Naive thymus-derived CD4-positive, alpha-beta T cell (primary cell): ENCODE measurements at regions of chr2 and their contacts with region 1.

Region 1: DNA sequence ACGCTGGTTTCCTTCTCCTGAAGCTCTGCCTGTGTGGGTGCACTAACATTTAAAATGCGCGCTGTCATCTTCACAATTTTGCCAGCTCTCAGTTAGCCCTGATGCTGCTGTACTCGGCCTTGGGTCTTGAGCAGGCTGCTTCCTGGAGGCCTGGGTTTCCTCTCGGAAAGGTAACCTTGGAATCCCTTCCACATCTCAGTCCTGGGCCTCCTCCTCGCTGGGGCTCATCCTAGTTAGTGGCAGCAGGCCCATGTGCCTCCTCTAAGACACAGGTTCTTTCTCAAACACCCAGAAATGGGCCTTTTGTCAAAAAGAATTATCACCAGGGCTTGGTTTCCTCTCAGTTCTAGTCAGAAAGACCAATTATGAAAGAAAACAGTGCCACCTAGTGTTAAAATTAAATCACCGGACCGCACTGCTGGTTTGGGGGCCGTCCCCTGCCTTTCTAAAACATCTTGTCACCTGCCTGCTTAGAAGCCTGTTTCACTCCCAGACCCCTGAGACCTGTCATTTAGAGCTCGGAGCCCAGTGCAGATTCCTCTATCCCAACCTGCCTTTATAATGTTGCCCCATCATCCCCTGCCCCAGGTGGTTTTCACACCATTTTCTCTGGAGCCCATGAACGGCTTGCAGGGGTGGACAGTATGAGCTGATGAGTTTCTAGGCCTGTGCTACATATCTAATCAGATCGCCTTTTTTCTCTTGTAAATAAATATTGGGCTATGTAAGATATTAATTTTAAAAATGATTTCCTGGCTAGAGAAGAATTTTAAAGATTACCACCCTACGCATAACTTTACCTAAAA is 42.4 kb downstream of the HK2 start:
- DNase-seq: peak in 7 of 9 donors; percentile 36 to 80 (median 76)
- ATAC-seq: peak; percentile 74
- H3K4me3 ChIP-seq: no peak overlapping the region
- H3K4me3 Mint-ChIP-seq: no peak overlapping the region
- H3K27ac ChIP-seq: no peak overlapping the region
- H3K27ac Mint-ChIP-seq: peak overlapping the region in 6 of 9 donors; percentile 20 to 78 (median 62)
- H3K4me1 ChIP-seq: peaks cover 0 to 3% of the 10 kb centered on the region in 2 donors
- H3K4me1 Mint-ChIP-seq: peaks cover 3 to 14% (median 6%) of the 10 kb centered on the region in 7 donors
- H3K27me3 ChIP-seq: no peaks in the 10 kb centered on the region
- H3K27me3 Mint-ChIP-seq: no peaks in the 10 kb centered on the region

Region 2: DNA sequence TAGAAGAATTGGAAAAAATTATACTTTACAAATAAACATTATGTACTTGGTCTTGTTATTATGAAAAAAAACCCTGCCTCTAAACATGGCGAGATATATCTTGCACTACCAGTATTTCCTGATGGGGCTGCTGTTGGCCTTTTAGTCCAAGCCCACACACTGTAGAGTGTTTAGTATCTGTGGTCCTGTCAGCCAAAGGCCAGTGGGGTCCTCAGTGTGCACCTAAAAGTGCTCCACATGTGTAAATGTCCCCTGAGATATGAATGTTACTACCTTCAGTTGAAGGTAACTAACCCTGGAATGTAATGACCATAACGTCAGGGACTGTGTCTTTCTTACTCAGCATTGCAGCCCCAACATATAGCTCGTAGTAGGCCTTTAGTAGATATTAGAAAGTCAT is 113.5 kb before region 1 on chr2:
- CTCF ChIA-PET with region 1: interaction called, 6 read pairs
- POLR2A ChIA-PET with region 1: no interaction called
- intact Hi-C with region 1: loop called (anchors 1 kb)
- DNase-seq: no peak
- ATAC-seq: no peak
- H3K4me3 ChIP-seq: no peak overlapping the region
- H3K4me3 Mint-ChIP-seq: no peak overlapping the region
- H3K27ac ChIP-seq: no peak overlapping the region
- H3K27ac Mint-ChIP-seq: no peak overlapping the region
- H3K4me1 ChIP-seq: no peaks in the 10 kb centered on the region
- H3K4me1 Mint-ChIP-seq: peaks cover 10 to 18% (median 16%) of the 10 kb centered on the region in 7 donors
- H3K27me3 ChIP-seq: no peaks in the 10 kb centered on the region
- H3K27me3 Mint-ChIP-seq: peaks cover 0 to 3% (median 0%) of the 10 kb centered on the region in 5 donors

Region 3: DNA sequence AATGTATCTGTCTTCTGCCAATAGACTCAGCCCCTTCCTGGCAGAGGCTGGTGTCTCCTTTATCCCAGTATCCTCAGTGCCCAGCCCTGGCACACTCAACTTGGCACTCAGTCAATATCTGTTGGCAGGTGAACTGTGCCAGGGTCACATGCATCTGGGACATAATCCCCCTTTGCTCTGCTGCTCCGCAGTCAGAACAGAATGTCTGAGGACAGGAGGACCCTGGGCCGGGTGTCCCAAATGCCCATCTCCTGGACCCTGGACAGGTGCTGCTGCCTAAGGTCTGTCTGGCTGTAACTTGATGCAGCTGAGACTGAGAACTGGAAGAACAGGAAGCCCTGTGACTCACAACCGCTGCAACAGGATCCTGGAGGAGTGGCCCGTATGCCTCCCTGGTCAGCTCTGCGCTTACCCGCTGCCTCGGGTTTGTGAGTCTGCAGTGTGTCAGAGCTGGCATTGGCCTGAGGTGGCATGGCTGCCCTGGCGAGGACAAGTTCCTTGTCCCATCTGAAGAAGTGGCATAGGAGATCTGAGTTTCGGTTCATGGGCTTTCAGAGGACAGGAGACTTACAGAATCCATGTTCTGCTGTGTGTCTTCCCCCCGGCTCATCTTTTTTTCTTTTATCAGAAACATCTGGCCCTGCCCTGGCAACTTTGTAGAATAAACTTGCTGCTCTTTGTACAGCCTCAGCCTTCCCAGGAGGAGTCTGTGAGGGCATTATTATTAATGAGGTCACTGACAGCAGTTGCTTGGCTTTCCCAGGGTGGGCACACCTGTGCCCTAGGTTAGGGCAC is 30.9 kb before region 1 on chr2:
- CTCF ChIA-PET with region 1: interaction called, 74 read pairs
- POLR2A ChIA-PET with region 1: interaction called, 5 read pairs
- intact Hi-C with region 1: loop called in 1 of 2 experiments (anchors 1 kb)
- DNase-seq: peak in 2 of 9 donors; percentile 23 to 51
- ATAC-seq: peak; percentile 70
- H3K4me3 ChIP-seq: peak overlapping the region; percentile 29
- H3K4me3 Mint-ChIP-seq: peak overlapping the region; percentile 65 to 87 (median 78)
- H3K27ac ChIP-seq: peak overlapping the region; percentile 39
- H3K27ac Mint-ChIP-seq: peak overlapping the region; percentile 85 to 99 (median 94)
- H3K4me1 ChIP-seq: peaks cover 37 to 97% of the 10 kb centered on the region in 2 donors
- H3K4me1 Mint-ChIP-seq: peaks cover 75 to 100% (median 97%) of the 10 kb centered on the region in 7 donors
- H3K27me3 ChIP-seq: no peaks in the 10 kb centered on the region
- H3K27me3 Mint-ChIP-seq: no peaks in the 10 kb centered on the region